B cell (primary cell): ENCODE measurements at regions of chr17 and their contacts with region 1.

Region 1: GRCh38 chr17:4304417-4305027 is 40.7 kb upstream of the ANKFY1 start:
- DNase-seq: peak; percentile 70
- ATAC-seq: peak; percentile 49
- H3K4me3 ChIP-seq: no peak overlapping the region
- H3K4me3 Mint-ChIP-seq: no peak overlapping the region
- H3K27ac ChIP-seq: no peak overlapping the region
- H3K27ac Mint-ChIP-seq: no peak overlapping the region
- H3K4me1 ChIP-seq: peaks cover 9 to 11% of the 10 kb centered on the region in 2 donors
- H3K4me1 Mint-ChIP-seq: peaks cover 23% of the 10 kb centered on the region
- H3K27me3 ChIP-seq: no peaks in the 10 kb centered on the region
- H3K27me3 Mint-ChIP-seq: no peaks in the 10 kb centered on the region
- CTCF ChIP-seq: peak; percentile 89

Region 2: DNA sequence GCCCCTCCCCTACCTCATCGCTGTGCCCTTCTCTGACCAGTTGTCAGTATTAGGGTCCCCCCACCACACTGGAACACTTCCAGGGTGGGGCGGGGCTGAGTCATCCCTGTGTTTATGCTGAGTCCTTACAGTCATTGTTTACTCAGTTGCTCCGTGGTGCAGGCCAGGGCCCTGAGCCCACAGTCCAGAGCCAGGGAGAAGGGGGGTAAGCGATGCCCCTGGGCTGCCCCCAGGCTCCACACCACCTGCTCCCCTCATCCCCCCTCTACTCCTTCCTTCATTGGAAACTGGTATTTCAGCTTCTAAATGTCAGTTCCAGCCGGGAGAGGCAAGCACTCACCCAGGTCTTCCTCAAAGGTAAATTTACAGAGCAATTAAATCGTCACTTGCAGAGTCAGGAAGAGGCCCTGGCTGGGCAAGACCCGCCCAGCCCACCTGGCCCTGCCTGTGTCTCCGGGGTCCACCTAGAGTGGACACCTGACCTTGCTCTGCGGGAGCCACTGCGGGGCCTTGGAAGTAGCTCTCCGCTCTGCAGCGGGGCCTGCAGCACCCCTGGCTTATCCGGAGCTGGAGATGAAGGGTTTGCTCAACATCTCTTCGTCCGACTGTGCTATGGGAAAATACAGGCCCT is 345.1 kb before region 1 on chr17:
- CTCF ChIA-PET with region 1: no interaction called
- POLR2A ChIA-PET with region 1: no interaction called
- intact Hi-C with region 1: no loop called
- DNase-seq: no peak
- ATAC-seq: no peak
- H3K4me3 ChIP-seq: no peak overlapping the region
- H3K4me3 Mint-ChIP-seq: peak overlapping the region; percentile 98
- H3K27ac ChIP-seq: peak overlapping the region; percentile 25 to 81
- H3K27ac Mint-ChIP-seq: peak overlapping the region; percentile 96
- H3K4me1 ChIP-seq: peaks cover 55 to 82% of the 10 kb centered on the region in 2 donors
- H3K4me1 Mint-ChIP-seq: peaks cover 66% of the 10 kb centered on the region
- H3K27me3 ChIP-seq: no peaks in the 10 kb centered on the region
- H3K27me3 Mint-ChIP-seq: no peaks in the 10 kb centered on the region
- CTCF ChIP-seq: no peak

Region 3: DNA sequence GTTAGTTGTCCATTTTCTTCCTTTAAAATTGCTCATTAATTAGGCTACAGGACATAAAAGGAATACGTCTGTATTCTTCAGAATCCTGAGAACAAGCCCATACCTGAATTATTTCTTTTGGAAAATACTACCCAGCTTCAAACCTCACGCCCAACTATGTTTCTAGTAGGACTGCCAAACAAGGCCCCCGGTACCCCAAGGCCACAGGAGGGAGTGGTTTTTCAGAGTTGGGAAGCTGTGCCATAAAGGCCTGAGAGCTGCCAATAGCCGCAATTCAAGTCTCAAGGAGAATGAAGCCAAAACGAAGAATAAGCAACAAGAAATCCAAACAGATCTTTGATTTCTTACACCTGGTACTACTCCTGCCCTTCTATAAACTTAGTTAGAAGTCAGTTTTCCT is 13.7 kb after region 1 on chr17:
- CTCF ChIA-PET with region 1: interaction called, 13 read pairs
- POLR2A ChIA-PET with region 1: no interaction called
- intact Hi-C with region 1: no loop called
- DNase-seq: no peak
- ATAC-seq: no peak
- H3K4me3 ChIP-seq: no peak overlapping the region
- H3K4me3 Mint-ChIP-seq: no peak overlapping the region
- H3K27ac ChIP-seq: no peak overlapping the region
- H3K27ac Mint-ChIP-seq: peak overlapping the region; percentile 15
- H3K4me1 ChIP-seq: peaks cover 6 to 8% of the 10 kb centered on the region in 2 donors
- H3K4me1 Mint-ChIP-seq: peaks cover 62% of the 10 kb centered on the region
- H3K27me3 ChIP-seq: no peaks in the 10 kb centered on the region
- H3K27me3 Mint-ChIP-seq: no peaks in the 10 kb centered on the region
- CTCF ChIP-seq: no peak

Region 4: DNA sequence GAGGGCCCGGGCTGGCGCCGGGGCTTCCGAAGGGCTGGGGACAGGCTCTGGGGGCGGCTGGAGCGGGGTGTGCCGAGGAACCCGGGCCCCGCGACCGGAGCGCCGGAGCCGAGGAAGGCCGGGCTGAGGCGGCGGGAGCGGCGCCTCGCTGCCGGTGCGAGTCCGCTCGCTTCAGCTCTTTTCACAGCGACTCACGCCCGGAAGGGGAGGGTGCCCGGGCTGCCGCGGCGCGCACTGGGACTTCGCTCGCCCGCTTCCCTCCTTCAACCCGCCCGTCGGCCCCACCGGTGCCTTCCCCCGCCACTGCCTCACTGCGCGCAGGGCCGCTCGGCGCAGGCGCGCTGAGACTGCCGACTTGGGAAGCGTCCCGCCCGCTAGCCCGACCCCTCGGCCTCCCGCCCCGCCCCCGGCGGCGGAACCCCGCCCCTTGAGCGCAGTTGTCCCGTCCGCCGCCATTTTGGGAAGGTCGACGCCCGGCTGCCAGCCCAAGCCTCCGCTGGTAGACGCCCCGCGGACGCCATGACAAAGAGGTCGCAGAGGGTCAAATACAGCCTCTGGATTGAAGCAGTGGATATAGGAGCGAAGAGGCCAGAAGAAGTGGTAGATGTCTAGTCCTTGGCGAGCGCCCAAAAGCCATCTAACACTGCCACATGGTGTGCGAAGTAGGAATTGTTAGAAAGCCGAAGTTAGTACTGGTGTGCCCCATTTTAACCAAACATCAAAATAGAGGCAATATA is 62.0 kb after region 1 on chr17 and contains the start of gene UBE2G1:
- CTCF ChIA-PET with region 1: no interaction called
- POLR2A ChIA-PET with region 1: no interaction called
- intact Hi-C with region 1: loop called (anchors 2 kb)
- DNase-seq: peak; percentile 99
- ATAC-seq: peak; percentile 81
- H3K4me3 ChIP-seq: peak within 1 kb of the TSS; percentile 50 to 97 (median 90)
- H3K4me3 Mint-ChIP-seq: peak within 1 kb of the TSS; percentile 87
- H3K27ac ChIP-seq: peak within 1 kb of the TSS; percentile 63 to 89
- H3K27ac Mint-ChIP-seq: peak within 1 kb of the TSS; percentile 93
- H3K4me1 ChIP-seq: peaks cover 10 to 34% of the 10 kb centered on the region in 2 donors
- H3K4me1 Mint-ChIP-seq: peaks cover 44% of the 10 kb centered on the region
- H3K27me3 ChIP-seq: no peaks in the 10 kb centered on the region
- H3K27me3 Mint-ChIP-seq: no peaks in the 10 kb centered on the region
- CTCF ChIP-seq: no peak
- total RNA-seq, gene UBE2G1: 76.0 and 78.1 TPM in 2 replicates